ENCODE measurements at regions of chr22 and their contacts with region 1.

Region 1: DNA sequence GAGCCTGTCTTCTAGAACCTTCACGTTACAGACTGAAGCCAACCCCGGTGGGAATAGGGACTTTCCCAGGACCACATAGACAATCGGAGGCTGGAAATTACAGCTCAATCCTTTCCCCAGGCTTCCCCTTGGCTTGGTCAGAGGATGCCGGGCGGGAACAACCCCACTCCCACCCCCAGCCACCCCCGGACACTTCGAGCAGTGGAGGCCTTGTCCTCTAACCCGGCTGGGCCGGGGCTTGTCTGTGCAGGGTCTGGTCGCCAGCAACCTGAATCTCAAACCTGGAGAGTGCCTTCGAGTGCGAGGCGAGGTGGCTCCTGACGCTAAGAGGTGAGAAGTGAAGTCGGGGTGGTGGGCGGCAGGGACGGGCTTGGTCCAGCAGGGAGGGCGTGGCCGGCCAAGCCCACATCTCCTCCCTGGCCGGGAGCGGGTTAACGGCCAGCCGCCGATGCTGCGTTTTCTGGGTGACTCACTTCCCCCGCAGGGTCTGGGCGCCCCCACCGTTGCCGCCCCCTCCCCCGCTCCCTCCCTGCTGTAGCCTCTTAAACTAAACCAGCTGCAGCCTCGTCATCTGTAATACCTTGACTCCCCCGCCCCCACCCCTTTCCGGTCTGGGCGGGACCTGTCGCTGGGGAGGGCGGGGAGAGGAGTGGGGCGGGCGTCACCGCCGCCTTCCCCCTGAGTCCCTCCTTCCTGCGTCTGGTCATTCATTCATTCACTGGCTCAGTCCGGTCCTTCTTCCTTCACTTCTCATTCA is 1.5 kb downstream of the LGALS1 start:
- DNase-seq: peak; percentile 82 to 95 (median 94)
- ATAC-seq: peak; percentile 93
- H3K4me3 ChIP-seq: peak overlapping the region; percentile 60
- H3K4me3 Mint-ChIP-seq: peak overlapping the region; percentile 82 to 99 (median 91)
- H3K27ac ChIP-seq: peak overlapping the region; percentile 99
- H3K27ac Mint-ChIP-seq: peak overlapping the region; percentile 94 to 100 (median 100)
- H3K4me1 ChIP-seq: peaks cover 29 to 37% of the 10 kb centered on the region in 2 donors
- H3K4me1 Mint-ChIP-seq: peaks cover 14 to 68% (median 60%) of the 10 kb centered on the region in 7 donors
- H3K27me3 ChIP-seq: no peaks in the 10 kb centered on the region
- H3K27me3 Mint-ChIP-seq: no peaks in the 10 kb centered on the region

Region 2: GRCh38 chr22:37282385-37282677 is 394.6 kb before region 1 on chr22 and contains the start of gene CYTH4:
- CTCF ChIA-PET with region 1: no interaction called
- POLR2A ChIA-PET with region 1: no interaction called
- intact Hi-C with region 1: loop called in 1 of 2 experiments (anchors 10 kb)
- DNase-seq: peak; percentile 48 to 76 (median 67)
- ATAC-seq: peak; percentile 78
- H3K4me3 ChIP-seq: peak within 1 kb of the TSS; percentile 89
- H3K4me3 Mint-ChIP-seq: peak within 1 kb of the TSS; percentile 90 to 98 (median 96)
- H3K27ac ChIP-seq: peak within 1 kb of the TSS; percentile 85
- H3K27ac Mint-ChIP-seq: peak within 1 kb of the TSS; percentile 90 to 99 (median 98)
- H3K4me1 ChIP-seq: peaks cover 16 to 27% of the 10 kb centered on the region in 2 donors
- H3K4me1 Mint-ChIP-seq: peaks cover 41 to 83% (median 62%) of the 10 kb centered on the region in 7 donors
- H3K27me3 ChIP-seq: no peaks in the 10 kb centered on the region
- H3K27me3 Mint-ChIP-seq: no peaks in the 10 kb centered on the region
- total RNA-seq, gene CYTH4: 123 to 227 (median 214) TPM

Region 3: GRCh38 chr22:37633625-37634416 is 43.1 kb before region 1 on chr22:
- CTCF ChIA-PET with region 1: interaction called, 254 read pairs
- POLR2A ChIA-PET with region 1: interaction called, 38 read pairs
- intact Hi-C with region 1: loop called (anchors 1 kb)
- DNase-seq: peak in 5 of 9 donors; percentile 25 to 68 (median 37)
- ATAC-seq: peak; percentile 81
- H3K4me3 ChIP-seq: peak overlapping the region; percentile 53
- H3K4me3 Mint-ChIP-seq: peak overlapping the region; percentile 18 to 80 (median 70)
- H3K27ac ChIP-seq: peak overlapping the region; percentile 71
- H3K27ac Mint-ChIP-seq: peak overlapping the region; percentile 86 to 98 (median 93)
- H3K4me1 ChIP-seq: peaks cover 55 to 72% of the 10 kb centered on the region in 2 donors
- H3K4me1 Mint-ChIP-seq: peaks cover 23 to 70% (median 64%) of the 10 kb centered on the region in 7 donors
- H3K27me3 ChIP-seq: no peaks in the 10 kb centered on the region
- H3K27me3 Mint-ChIP-seq: no peaks in the 10 kb centered on the region

Region 4: GRCh38 chr22:37658133-37659065 is 18.5 kb before region 1 on chr22 and contains the start of gene PDXP:
- CTCF ChIA-PET with region 1: interaction called, 30 read pairs
- POLR2A ChIA-PET with region 1: interaction called, 142 read pairs
- intact Hi-C with region 1: loop called (anchors 1 kb)
- DNase-seq: peak; percentile 95 to 99 (median 98)
- ATAC-seq: peak; percentile 96
- H3K4me3 ChIP-seq: peak within 1 kb of the TSS; percentile 60
- H3K4me3 Mint-ChIP-seq: peak within 1 kb of the TSS; percentile 85 to 95 (median 89)
- H3K27ac ChIP-seq: peak within 1 kb of the TSS; percentile 75
- H3K27ac Mint-ChIP-seq: peak within 1 kb of the TSS; percentile 82 to 98 (median 91)
- H3K4me1 ChIP-seq: peaks cover 23 to 26% of the 10 kb centered on the region in 2 donors
- H3K4me1 Mint-ChIP-seq: peaks cover 27 to 45% (median 41%) of the 10 kb centered on the region in 7 donors
- H3K27me3 ChIP-seq: no peaks in the 10 kb centered on the region
- H3K27me3 Mint-ChIP-seq: no peaks in the 10 kb centered on the region
- total RNA-seq, gene PDXP: 3.9 to 27.4 (median 7.5) TPM

Region 5: DNA sequence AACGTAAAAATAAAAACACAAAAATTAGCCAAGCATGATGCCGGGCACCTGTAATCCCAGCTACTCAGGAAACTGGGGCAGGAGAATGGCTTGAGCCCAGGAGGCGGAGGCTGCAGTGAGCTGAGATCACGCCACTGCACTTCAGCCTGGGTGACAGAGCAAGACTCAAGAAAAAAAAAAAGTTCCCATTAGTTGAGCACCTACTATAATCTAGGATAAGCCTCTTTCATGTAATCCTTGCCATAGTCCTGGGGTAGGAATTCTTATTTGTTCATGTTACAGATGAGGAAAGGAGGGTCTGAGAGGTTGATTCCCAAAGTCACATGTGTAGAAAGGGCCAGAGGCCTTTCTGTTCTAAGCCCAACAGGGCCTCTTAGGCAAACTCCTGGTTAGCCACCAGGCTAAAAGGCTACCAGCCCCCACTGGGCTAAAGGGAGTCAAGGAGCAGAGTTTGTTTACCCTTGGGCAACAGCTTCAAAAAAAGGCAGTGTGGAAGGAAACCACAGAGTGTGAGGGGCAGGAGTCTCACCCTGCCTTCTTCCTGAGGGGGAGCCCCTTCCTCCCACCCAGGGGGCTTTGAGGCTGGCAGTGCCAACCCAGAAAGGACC is 662.0 kb after region 1 on chr22:
- CTCF ChIA-PET with region 1: no interaction called
- POLR2A ChIA-PET with region 1: no interaction called
- intact Hi-C with region 1: no loop called
- DNase-seq: no peak
- ATAC-seq: no peak
- H3K4me3 ChIP-seq: no peak overlapping the region
- H3K4me3 Mint-ChIP-seq: no peak overlapping the region
- H3K27ac ChIP-seq: no peak overlapping the region
- H3K27ac Mint-ChIP-seq: no peak overlapping the region
- H3K4me1 ChIP-seq: no peaks in the 10 kb centered on the region
- H3K4me1 Mint-ChIP-seq: peaks cover 0 to 7% (median 4%) of the 10 kb centered on the region in 7 donors
- H3K27me3 ChIP-seq: peaks cover 0 to 5% of the 10 kb centered on the region in 2 donors
- H3K27me3 Mint-ChIP-seq: peaks cover 4 to 15% (median 10%) of the 10 kb centered on the region in 5 donors